Tibial artery (tissue), 4 donors: ENCODE measurements at regions of chr9 and their contacts with region 1.

Region 1: GRCh38 chr9:38017149-38017884 is 51.7 kb downstream of the SHB start:
- DNase-seq: peak; percentile 39 to 83
- H3K4me3 ChIP-seq: peak overlapping the region in 1 of 2 donors; percentile 27
- H3K27ac ChIP-seq: peak overlapping the region; percentile 34 to 37
- H3K4me1 ChIP-seq: peaks cover 0 to 54% (median 45%) of the 10 kb centered on the region in 4 donors
- H3K27me3 ChIP-seq: no peaks in the 10 kb centered on the region
- CTCF ChIP-seq: peak; percentile 69 to 78

Region 2: DNA sequence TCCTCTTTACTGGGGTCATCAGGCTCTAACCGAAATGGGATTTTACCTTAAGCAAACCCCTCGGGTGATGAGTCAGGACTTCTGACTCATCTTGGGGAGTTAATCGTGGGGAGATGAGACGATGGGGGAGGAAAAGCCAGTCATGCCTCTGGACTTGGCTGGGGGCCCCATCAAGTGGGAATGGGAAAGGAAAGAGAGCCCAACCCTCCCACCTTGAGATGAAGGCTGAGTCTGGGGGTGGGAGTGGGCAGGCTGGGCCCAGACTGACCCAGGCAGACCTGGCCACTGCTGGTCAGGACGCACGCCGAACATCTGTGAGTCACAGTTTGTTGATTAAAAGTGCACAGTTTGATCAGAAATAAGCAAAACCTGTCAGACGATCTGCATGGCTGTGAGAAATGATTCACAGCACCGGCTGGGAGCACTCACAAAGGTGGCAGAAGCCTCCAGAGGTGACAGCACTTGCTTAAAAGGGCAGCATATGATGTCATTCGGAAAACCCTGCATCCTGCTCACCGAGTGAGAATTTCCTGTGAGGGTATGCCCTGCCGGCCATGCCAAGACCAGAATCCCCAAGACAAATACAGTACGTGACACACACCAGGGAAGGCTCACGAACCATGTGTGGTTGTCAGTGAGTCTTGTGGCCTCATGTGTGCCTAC is 63.4 kb before region 1 on chr9:
- intact Hi-C with region 1: loop called (anchors 10 kb)
- DNase-seq: no peak
- H3K4me3 ChIP-seq: no peak overlapping the region
- H3K27ac ChIP-seq: peak overlapping the region; percentile 42 to 54
- H3K4me1 ChIP-seq: peaks cover 0 to 33% (median 15%) of the 10 kb centered on the region in 4 donors
- H3K27me3 ChIP-seq: no peaks in the 10 kb centered on the region
- CTCF ChIP-seq: no peak

Region 3: GRCh38 chr9:37976714-37977477 is 40.4 kb before region 1 on chr9:
- intact Hi-C with region 1: no loop called
- DNase-seq: peak in 1 of 2 donors; percentile 60
- H3K4me3 ChIP-seq: no peak overlapping the region
- H3K27ac ChIP-seq: peak overlapping the region in 1 of 2 donors; percentile 17
- H3K4me1 ChIP-seq: no peaks in the 10 kb centered on the region
- H3K27me3 ChIP-seq: no peaks in the 10 kb centered on the region
- CTCF ChIP-seq: no peak

Region 4: DNA sequence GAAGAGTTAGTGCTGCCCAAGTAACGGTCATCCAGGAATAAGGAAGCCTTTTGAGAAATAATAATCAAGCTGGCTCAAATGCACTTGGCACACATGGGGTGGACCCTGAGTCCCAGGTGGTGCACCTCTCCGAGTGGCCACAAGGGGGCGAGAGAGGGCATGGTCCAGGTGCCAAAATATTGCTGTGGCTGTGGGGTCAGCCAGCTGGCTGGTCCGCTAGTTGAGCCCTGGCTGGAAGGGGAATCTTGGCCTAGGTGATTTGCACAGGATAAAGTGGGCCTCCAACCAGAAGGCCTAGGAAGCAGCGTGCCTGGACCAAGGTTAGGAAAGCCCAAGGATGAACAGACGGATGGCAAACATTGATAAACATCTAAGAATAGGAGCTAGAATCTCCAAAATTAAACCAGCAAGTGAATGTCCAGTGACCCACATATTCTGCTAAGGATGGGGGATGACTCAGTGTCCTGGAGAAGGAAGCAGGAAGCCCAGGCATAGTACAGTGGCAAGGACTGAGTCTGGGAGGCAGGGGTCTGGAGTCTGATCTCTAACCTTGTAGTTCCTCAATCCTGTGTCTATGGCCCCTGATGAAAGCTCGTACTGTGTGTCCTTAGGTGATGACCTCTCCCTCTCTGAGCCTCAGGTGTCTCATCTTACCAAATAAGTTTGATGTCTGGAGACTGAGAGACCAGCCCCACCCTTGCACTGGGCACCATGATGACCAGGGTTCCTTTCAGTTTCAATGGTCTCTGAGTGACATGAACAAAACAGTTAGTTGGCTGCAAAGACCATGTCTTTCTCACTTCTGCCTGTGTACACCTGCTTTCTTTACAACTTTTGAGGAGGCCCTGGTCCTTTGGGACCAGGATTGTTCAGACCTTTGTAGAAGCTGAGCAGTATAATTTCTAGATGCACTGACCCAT is 70.9 kb after region 1 on chr9:
- intact Hi-C with region 1: loop called (anchors 5 kb)
- DNase-seq: peak; percentile 70 to 86
- H3K4me3 ChIP-seq: no peak overlapping the region
- H3K27ac ChIP-seq: no peak overlapping the region
- H3K4me1 ChIP-seq: peaks cover 0 to 8% (median 2%) of the 10 kb centered on the region in 4 donors
- H3K27me3 ChIP-seq: no peaks in the 10 kb centered on the region
- CTCF ChIP-seq: peak; percentile 89 to 96

Region 5: DNA sequence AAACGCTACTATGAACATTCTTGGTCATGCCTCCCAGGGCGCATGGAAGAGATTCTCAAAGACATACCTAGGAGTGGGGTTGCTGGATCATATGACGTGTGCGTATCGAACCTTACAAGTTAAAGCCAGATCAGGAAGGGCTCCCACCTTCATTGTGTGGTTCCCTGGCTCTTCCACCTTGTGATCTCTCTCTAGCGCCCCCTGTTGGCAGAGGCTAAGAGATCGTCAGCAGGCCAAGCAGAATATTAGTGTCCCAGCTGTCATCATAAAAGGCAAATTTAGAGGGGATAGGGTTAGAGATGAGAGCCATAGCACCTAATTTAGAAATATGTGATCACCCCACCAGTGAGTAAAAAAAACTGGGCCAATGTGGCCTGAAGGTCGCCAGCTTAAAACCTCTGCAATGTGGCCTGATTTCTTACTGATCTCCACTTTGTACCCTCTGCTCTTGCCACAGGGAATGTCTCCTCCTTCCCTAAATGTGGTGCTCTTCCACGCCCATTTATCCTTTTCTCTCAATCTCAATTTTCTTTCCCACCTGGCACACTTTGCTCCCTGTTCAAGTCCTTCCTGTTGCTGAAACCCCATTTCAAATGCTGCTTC is 143.4 kb after region 1 on chr9:
- intact Hi-C with region 1: loop called (anchors 10 kb)
- DNase-seq: peak; percentile 56 to 75
- H3K4me3 ChIP-seq: no peak overlapping the region
- H3K27ac ChIP-seq: no peak overlapping the region
- H3K4me1 ChIP-seq: peaks cover 0 to 4% (median 0%) of the 10 kb centered on the region in 4 donors
- H3K27me3 ChIP-seq: no peaks in the 10 kb centered on the region
- CTCF ChIP-seq: peak; percentile 63 to 80

Region 6: GRCh38 chr9:38408719-38409118 is 391.4 kb after region 1 on chr9:
- intact Hi-C with region 1: loop called (anchors 10 kb)
- DNase-seq: no peak
- H3K4me3 ChIP-seq: no peak overlapping the region
- H3K27ac ChIP-seq: no peak overlapping the region
- H3K4me1 ChIP-seq: no peaks in the 10 kb centered on the region
- H3K27me3 ChIP-seq: no peaks in the 10 kb centered on the region
- CTCF ChIP-seq: no peak